ENCODE measurements at regions of chr17 and their contacts with region 1.

Region 1: GRCh38 chr17:75673487-75673886 is 6.3 kb downstream of the SAP30BP start:
- DNase-seq: no peak
- ATAC-seq: no peak
- H3K4me3 ChIP-seq: no peak overlapping the region
- H3K4me3 Mint-ChIP-seq: no peak overlapping the region
- H3K27ac ChIP-seq: no peak overlapping the region
- H3K27ac Mint-ChIP-seq: no peak overlapping the region
- H3K4me1 ChIP-seq: peaks cover 2% of the 10 kb centered on the region
- H3K4me1 Mint-ChIP-seq: peaks cover 18% of the 10 kb centered on the region
- H3K27me3 ChIP-seq: no peaks in the 10 kb centered on the region
- H3K27me3 Mint-ChIP-seq: no peaks in the 10 kb centered on the region
- CTCF ChIP-seq: no peak

Region 2: DNA sequence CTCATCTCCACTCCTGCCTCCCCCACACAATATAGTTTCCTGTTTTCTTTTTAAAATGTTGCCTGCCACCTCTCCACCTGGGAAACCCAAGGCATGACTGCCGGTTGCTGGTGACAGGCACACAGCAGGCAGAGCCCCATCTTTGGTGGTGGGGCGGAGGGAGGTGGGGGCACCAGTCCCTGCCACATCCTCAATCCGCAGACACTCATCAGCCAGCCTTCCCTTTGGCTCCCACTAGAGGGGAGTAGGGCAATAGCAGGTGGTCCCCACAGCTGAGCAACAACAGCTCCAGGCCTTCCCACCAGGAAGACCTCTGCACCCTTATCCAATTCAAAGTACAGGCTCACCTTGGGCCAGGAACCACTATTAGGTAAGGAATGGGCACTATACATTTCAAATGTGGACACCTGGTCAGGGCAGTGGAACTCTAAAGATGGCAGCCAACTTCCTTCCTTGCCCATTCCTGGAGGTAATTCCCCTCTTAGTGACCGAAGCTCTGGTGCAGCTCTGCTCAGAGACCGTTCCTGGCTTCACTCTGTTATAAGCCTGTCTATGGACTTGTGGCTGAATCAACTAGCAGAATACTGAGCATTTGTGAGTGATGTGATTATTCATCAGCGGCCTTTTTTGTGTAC is 20.5 kb before region 1 on chr17:
- CTCF ChIA-PET with region 1: interaction called, 11 read pairs
- POLR2A ChIA-PET with region 1: interaction called, 3 read pairs
- intact Hi-C with region 1: loop called in 1 of 2 experiments (anchors 1 kb)
- DNase-seq: peak in 6 of 9 experiments; percentile 9 to 64 (median 42)
- ATAC-seq: peak; percentile 100
- H3K4me3 ChIP-seq: no peak overlapping the region
- H3K4me3 Mint-ChIP-seq: no peak overlapping the region
- H3K27ac ChIP-seq: no peak overlapping the region
- H3K27ac Mint-ChIP-seq: no peak overlapping the region
- H3K4me1 ChIP-seq: no peaks in the 10 kb centered on the region
- H3K4me1 Mint-ChIP-seq: peaks cover 9% of the 10 kb centered on the region
- H3K27me3 ChIP-seq: no peaks in the 10 kb centered on the region
- H3K27me3 Mint-ChIP-seq: no peaks in the 10 kb centered on the region
- CTCF ChIP-seq: peak; percentile 59

Region 3: GRCh38 chr17:75693500-75694481 is 20.3 kb after region 1 on chr17:
- CTCF ChIA-PET with region 1: interaction called, 11 read pairs
- POLR2A ChIA-PET with region 1: no interaction called
- intact Hi-C with region 1: loop called in 1 of 2 experiments (anchors 1 kb)
- DNase-seq: no peak
- ATAC-seq: no peak
- H3K4me3 ChIP-seq: no peak overlapping the region
- H3K4me3 Mint-ChIP-seq: no peak overlapping the region
- H3K27ac ChIP-seq: no peak overlapping the region
- H3K27ac Mint-ChIP-seq: no peak overlapping the region
- H3K4me1 ChIP-seq: peaks cover 26% of the 10 kb centered on the region
- H3K4me1 Mint-ChIP-seq: peaks cover 34% of the 10 kb centered on the region
- H3K27me3 ChIP-seq: no peaks in the 10 kb centered on the region
- H3K27me3 Mint-ChIP-seq: no peaks in the 10 kb centered on the region
- CTCF ChIP-seq: no peak